Natural killer cell (primary cell): ENCODE measurements at regions of chr17 and their contacts with region 1.

Region 1: DNA sequence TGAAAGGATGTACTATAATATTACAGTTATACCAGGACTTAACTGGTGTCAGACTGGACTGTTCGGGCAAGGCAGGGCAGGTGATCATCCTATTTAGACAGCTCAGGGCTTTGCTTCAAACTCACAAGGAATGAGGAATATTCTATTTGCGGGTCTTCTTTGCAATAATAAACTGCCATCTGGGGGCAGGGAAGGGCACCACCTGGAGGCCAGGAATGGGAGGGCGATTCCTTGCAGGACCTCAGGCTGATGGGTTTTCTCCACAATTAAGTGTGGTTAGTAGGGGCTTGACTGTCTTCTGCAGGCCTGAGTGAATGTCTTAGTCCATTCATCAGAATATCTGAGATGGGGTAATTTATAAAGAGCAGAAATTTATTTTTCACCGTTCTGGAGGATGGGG is 424.1 kb downstream of the CA10 start:
- DNase-seq: peak in 1 of 2 donors; percentile 26
- ATAC-seq: no peak
- H3K4me3 ChIP-seq: no peak overlapping the region
- H3K4me3 Mint-ChIP-seq: no peak overlapping the region
- H3K27ac ChIP-seq: no peak overlapping the region
- H3K27ac Mint-ChIP-seq: no peak overlapping the region
- H3K4me1 ChIP-seq: no peaks in the 10 kb centered on the region
- H3K4me1 Mint-ChIP-seq: no peaks in the 10 kb centered on the region
- H3K27me3 ChIP-seq: no peaks in the 10 kb centered on the region
- H3K27me3 Mint-ChIP-seq: no peaks in the 10 kb centered on the region
- CTCF ChIP-seq: no peak

Region 2: GRCh38 chr17:51585514-51586104 is 148.9 kb before region 1 on chr17:
- intact Hi-C with region 1: loop called (anchors 2 kb)
- DNase-seq: no peak
- ATAC-seq: no peak
- H3K4me3 ChIP-seq: no peak overlapping the region
- H3K4me3 Mint-ChIP-seq: no peak overlapping the region
- H3K27ac ChIP-seq: no peak overlapping the region
- H3K27ac Mint-ChIP-seq: no peak overlapping the region
- H3K4me1 ChIP-seq: no peaks in the 10 kb centered on the region
- H3K4me1 Mint-ChIP-seq: no peaks in the 10 kb centered on the region
- H3K27me3 ChIP-seq: no peaks in the 10 kb centered on the region
- H3K27me3 Mint-ChIP-seq: peaks cover 12 to 18% of the 10 kb centered on the region in 2 donors
- CTCF ChIP-seq: no peak